T-cell (primary cell): ENCODE measurements at regions of chr11 and their contacts with region 1.

Region 1: GRCh38 chr11:125592305-125593112 is at the start of gene STT3A:
- DNase-seq: peak; percentile 95 to 99 (median 98)
- ATAC-seq: peak; percentile 93 to 97 (median 95)
- H3K4me3 ChIP-seq: peak within 1 kb of the TSS; percentile 74 to 90
- H3K4me3 Mint-ChIP-seq: peak within 1 kb of the TSS; percentile 90 to 95 (median 91)
- H3K27ac ChIP-seq: peak within 1 kb of the TSS; percentile 96
- H3K27ac Mint-ChIP-seq: peak within 1 kb of the TSS; percentile 98 to 99
- H3K4me1 ChIP-seq: peaks cover 15 to 17% of the 10 kb centered on the region in 2 experiments
- H3K4me1 Mint-ChIP-seq: peaks cover 48 to 60% (median 59%) of the 10 kb centered on the region in 3 donors
- H3K27me3 ChIP-seq: no peaks in the 10 kb centered on the region
- H3K27me3 Mint-ChIP-seq: no peaks in the 10 kb centered on the region
- total RNA-seq, gene STT3A: 51.0 to 103 (median 88.5) TPM

Region 2: DNA sequence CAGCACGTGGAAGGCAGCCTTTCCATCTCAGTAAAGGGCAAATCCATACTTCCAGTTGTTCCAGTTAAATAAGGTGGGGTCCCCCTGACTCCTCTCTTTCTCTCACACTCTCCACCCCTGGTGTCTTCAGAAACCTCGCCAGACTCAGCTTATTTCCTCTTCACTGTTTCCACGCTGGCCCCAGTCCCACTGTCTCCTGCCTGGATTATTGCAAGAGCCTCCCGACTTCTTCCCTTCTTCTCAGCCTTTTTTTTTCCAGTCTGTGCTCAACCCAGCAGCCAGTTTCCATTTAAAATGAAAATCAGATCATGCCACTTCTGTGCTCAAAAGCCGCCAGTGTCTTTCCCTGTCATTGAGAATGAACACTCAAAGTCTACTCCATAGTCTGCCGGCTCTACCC is 296.6 kb before region 1 on chr11:
- CTCF ChIA-PET with region 1: no interaction called
- POLR2A ChIA-PET with region 1: no interaction called
- DNase-seq: no peak
- ATAC-seq: no peak
- H3K4me3 ChIP-seq: no peak overlapping the region
- H3K4me3 Mint-ChIP-seq: no peak overlapping the region
- H3K27ac ChIP-seq: no peak overlapping the region
- H3K27ac Mint-ChIP-seq: no peak overlapping the region
- H3K4me1 ChIP-seq: no peaks in the 10 kb centered on the region
- H3K4me1 Mint-ChIP-seq: no peaks in the 10 kb centered on the region
- H3K27me3 ChIP-seq: peaks cover 0 to 10% of the 10 kb centered on the region in 2 experiments
- H3K27me3 Mint-ChIP-seq: peaks cover 9 to 24% of the 10 kb centered on the region in 2 donors

Region 3: DNA sequence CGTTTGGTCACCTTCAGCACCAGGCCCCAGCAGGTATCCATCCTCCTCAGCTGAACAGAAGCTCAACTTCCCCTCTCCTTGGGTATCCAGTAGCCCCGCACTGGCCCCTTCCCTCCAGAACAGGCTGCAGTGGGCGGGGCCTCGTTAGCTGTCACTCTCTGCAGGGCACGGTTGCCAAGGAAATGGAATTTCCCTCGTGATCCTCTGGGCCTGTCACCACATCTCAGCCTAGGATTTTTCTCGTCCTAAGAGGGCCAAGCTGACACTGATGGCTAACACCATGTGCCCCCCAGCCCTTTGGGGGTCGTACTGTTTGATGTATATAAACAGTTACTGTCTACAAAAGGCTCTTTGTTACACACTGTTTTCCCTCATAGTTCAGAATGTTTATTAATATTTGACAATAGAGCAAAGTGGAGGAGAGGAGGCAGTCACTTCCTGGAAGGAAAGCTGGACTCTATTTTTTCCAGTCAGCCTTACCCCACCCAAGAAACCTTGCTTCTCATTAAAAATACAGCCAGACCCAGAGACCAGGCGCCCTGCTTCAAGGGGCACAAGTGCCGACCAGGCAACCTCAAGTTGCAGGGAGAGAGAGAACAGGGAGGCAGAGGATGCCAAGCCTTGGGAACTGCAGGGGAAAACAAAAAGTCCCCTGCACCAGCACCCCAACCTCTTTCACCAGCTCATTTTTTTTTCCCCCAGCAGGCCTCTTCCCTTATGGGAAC is 140.9 kb before region 1 on chr11:
- CTCF ChIA-PET with region 1: no interaction called
- POLR2A ChIA-PET with region 1: no interaction called
- DNase-seq: peak in 2 of 35 experiments; percentile 8 to 21
- ATAC-seq: no peak
- H3K4me3 ChIP-seq: no peak overlapping the region
- H3K4me3 Mint-ChIP-seq: no peak overlapping the region
- H3K27ac ChIP-seq: no peak overlapping the region
- H3K27ac Mint-ChIP-seq: peak overlapping the region in 1 of 2 donors; percentile 44
- H3K4me1 ChIP-seq: no peaks in the 10 kb centered on the region
- H3K4me1 Mint-ChIP-seq: peaks cover 0 to 14% (median 8%) of the 10 kb centered on the region in 3 donors
- H3K27me3 ChIP-seq: no peaks in the 10 kb centered on the region
- H3K27me3 Mint-ChIP-seq: peaks cover 0 to 2% of the 10 kb centered on the region in 2 donors

Region 4: DNA sequence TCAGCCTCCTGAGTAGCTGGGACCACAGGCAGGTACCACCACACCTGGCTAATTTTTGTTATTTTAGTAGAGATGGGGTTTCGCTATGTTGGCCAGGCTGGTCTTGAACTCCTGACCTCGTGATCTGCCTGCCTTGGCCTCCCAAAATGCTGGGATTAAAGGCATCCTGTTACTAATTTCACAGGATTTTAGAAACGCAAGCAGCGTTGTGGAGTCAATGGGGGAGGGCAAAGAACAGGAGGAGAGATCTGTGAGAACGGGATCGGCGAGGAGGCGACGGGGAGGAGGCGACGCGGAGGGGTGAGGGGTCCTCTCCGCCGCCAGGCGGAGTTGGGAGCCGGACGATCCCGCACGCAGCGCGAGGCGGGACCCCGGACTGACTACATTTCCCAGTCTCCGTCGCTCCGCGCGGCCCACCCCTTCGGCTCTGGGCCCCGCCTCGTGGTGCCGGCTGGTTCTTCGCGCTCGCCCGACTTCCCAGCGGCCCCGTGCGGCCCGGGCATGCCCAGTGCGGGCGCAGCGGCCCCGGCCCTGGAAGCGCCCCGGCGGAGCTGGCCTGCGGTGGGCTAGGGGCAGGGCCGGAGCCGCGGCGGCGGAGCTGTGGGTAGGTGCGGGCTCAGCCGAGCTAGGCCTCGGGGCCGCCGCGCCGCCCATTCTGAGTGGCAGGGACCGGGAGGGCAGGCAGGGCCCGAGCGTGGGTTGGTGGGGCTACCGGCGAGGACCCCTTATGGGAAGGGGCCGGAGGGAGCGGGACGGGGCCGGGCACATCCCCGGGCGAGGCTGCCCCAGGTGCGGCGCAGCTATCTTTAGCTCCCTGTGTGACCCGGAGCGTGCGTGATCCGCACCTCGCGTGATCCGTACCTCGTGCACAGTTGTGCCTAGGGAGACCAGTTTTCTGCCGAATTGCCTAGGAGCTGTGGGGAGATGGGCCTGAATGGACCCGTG is 23.3 kb before region 1 on chr11 and contains the start of gene EI24:
- CTCF ChIA-PET with region 1: interaction called, 5 to 33 read pairs
- POLR2A ChIA-PET with region 1: interaction called, 4 to 14 read pairs
- DNase-seq: peak; percentile 72 to 93 (median 80)
- ATAC-seq: peak; percentile 96 to 98 (median 98)
- H3K4me3 ChIP-seq: peak within 1 kb of the TSS; percentile 78 to 92
- H3K4me3 Mint-ChIP-seq: peak within 1 kb of the TSS; percentile 89 to 93 (median 91)
- H3K27ac ChIP-seq: peak within 1 kb of the TSS; percentile 78
- H3K27ac Mint-ChIP-seq: peak within 1 kb of the TSS; percentile 92 to 95
- H3K4me1 ChIP-seq: peaks cover 13 to 24% of the 10 kb centered on the region in 2 experiments
- H3K4me1 Mint-ChIP-seq: peaks cover 23 to 29% (median 24%) of the 10 kb centered on the region in 3 donors
- H3K27me3 ChIP-seq: no peaks in the 10 kb centered on the region
- H3K27me3 Mint-ChIP-seq: no peaks in the 10 kb centered on the region
- total RNA-seq, gene EI24: 20.0 to 33.0 (median 29.9) TPM

Region 5: DNA sequence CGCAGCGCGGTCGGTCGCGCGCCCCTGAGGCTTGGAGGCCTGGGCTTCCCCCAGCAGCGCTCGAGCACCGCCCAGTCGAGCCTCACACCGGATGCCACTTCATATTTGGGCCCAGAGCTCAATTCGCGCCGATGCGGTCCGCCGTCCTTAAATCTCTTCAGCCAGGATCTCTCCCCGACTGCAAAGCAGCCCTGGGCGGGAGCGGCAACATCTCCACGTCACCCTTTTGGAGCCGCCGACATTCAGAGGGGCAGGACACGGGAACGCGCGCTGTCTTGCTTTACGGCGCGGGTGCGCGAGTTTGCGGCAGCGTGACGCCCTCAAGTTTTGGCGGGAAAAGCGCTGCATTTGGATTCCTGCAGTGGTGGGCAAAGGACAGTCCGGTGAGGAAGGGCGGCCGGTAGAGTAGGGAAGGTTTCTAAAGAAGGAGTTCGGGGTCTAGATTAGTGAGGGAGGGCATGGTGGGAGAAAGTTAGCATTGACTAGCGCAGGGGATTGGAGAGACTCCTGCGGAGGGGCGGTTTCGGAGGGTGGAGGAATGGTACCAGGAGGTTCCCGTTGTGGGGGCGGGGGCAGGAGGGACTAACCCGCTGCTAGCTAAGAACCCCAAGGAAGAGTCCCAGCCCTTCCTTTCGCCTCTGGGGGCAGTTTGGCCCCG is 33.2 kb after region 1 on chr11:
- CTCF ChIA-PET with region 1: interaction called in 1 of 2 experiments, 14 read pairs
- POLR2A ChIA-PET with region 1: interaction called, 3 to 5 read pairs
- DNase-seq: peak; percentile 59 to 87 (median 74)
- ATAC-seq: peak; percentile 94 to 95 (median 95)
- H3K4me3 ChIP-seq: peak overlapping the region; percentile 91
- H3K4me3 Mint-ChIP-seq: peak overlapping the region; percentile 92 to 99 (median 93)
- H3K27ac ChIP-seq: peak overlapping the region; percentile 97
- H3K27ac Mint-ChIP-seq: peak overlapping the region; percentile 95 to 97
- H3K4me1 ChIP-seq: peaks cover 5 to 21% of the 10 kb centered on the region in 2 experiments
- H3K4me1 Mint-ChIP-seq: peaks cover 20 to 25% (median 20%) of the 10 kb centered on the region in 3 donors
- H3K27me3 ChIP-seq: no peaks in the 10 kb centered on the region
- H3K27me3 Mint-ChIP-seq: no peaks in the 10 kb centered on the region

Region 6: DNA sequence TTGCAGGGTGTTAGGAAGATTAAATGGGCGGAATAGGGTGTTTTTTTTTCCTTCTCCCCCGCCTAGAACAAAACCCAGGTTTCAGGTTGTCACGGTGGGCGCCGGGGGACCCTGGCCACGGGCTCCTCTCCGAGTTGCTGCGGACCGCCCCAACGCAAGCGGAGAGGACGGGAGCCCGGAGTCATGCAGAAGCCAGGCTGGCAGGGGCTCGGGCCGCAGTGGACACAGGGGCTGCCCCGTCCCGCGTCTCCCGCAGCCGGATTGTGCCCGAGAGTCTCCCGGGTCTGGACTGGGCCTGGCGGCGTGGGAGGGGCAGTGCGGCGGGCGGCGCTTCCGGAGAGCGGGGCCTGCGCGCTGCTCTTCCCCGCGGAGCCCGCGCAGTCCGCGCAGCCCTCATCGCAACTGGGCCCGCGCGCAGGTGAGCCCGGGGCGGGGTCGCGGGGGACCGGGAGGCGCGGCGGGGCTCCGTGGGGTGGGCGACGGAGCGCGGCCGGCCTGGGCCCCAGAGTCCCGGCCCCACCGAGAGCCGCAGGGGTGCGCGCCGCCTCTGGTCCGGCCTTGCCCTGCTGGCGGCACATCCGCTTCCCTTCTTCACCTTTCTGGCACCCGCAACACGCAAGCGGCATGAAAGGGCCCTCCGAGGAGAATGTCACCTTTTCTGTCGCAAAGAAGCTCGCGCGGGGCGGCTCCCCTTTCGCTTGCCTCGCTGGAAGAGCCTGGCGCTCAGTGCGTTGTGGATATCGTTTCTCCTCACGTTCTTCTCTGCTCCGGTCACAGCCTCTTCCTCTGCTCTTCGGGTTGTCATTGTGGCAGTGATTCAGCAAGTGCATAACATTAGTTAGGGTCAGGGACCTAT is 690.5 kb after region 1 on chr11 and contains the start of gene TIRAP:
- CTCF ChIA-PET with region 1: no interaction called
- POLR2A ChIA-PET with region 1: interaction called in 1 of 2 experiments, 11 read pairs
- DNase-seq: peak; percentile 39 to 78 (median 62)
- ATAC-seq: peak; percentile 73 to 80 (median 76)
- H3K4me3 ChIP-seq: peak within 1 kb of the TSS; percentile 64 to 85
- H3K4me3 Mint-ChIP-seq: peak within 1 kb of the TSS; percentile 86 to 95 (median 90)
- H3K27ac ChIP-seq: peak within 1 kb of the TSS; percentile 77
- H3K27ac Mint-ChIP-seq: peak within 1 kb of the TSS; percentile 97 to 98
- H3K4me1 ChIP-seq: peaks cover 11 to 52% of the 10 kb centered on the region in 2 experiments
- H3K4me1 Mint-ChIP-seq: peaks cover 47 to 59% (median 49%) of the 10 kb centered on the region in 3 donors
- H3K27me3 ChIP-seq: no peaks in the 10 kb centered on the region
- H3K27me3 Mint-ChIP-seq: no peaks in the 10 kb centered on the region
- total RNA-seq, gene TIRAP: 11.3 to 23.4 (median 21.9) TPM